Activated CD4-positive, alpha-beta memory T cell treated with anti-CD3 and anti-CD28 coated beads for 36 hours (primary cell): ENCODE measurements at regions of chr3 and their contacts with region 1.

Region 1: DNA sequence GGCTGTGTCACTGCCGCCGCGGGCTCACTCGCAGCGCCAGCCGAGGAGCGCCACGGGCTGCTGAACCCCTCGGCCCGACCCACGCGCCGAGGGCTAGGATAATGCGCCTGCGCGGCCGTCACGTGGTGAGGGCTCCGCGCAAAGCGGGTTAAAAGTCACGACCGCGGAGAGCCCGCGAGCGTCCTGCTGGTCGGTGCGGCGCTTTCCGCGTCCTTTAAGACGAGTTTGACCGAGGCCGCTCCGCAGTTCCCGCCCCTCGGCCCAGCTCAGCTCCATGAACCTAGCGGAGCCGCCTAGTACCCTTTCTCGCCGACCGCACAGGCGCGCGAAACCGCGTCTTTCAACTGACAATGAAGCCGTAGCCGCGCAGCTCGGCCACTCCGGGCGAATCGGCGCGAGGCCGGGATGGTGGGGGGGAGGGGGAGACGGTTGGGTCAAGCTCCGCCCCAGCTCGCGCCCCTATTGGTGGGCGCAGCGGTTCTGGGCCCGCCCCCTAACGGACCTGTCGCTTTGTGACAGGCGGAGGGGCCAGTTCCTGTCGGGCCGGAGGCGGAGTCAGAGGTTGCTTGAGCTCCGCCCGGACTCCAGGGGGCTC is 636 bp upstream of the STT3B start:
- DNase-seq: peak; percentile 99
- H3K4me3 Mint-ChIP-seq: peak overlapping the region; percentile 97
- H3K27ac Mint-ChIP-seq: peak overlapping the region; percentile 99
- H3K4me1 Mint-ChIP-seq: peaks cover 11% of the 10 kb centered on the region
- H3K27me3 Mint-ChIP-seq: no peaks in the 10 kb centered on the region

Region 2: GRCh38 chr3:30628901-30629590 is 903.0 kb before region 1 on chr3:
- CTCF ChIA-PET with region 1: no interaction called
- POLR2A ChIA-PET with region 1: no interaction called
- intact Hi-C with region 1: loop called (anchors 5 kb)
- DNase-seq: no peak
- H3K4me3 Mint-ChIP-seq: peak overlapping the region; percentile 45
- H3K27ac Mint-ChIP-seq: peak overlapping the region; percentile 91
- H3K4me1 Mint-ChIP-seq: peaks cover 90% of the 10 kb centered on the region
- H3K27me3 Mint-ChIP-seq: no peaks in the 10 kb centered on the region

Region 3: DNA sequence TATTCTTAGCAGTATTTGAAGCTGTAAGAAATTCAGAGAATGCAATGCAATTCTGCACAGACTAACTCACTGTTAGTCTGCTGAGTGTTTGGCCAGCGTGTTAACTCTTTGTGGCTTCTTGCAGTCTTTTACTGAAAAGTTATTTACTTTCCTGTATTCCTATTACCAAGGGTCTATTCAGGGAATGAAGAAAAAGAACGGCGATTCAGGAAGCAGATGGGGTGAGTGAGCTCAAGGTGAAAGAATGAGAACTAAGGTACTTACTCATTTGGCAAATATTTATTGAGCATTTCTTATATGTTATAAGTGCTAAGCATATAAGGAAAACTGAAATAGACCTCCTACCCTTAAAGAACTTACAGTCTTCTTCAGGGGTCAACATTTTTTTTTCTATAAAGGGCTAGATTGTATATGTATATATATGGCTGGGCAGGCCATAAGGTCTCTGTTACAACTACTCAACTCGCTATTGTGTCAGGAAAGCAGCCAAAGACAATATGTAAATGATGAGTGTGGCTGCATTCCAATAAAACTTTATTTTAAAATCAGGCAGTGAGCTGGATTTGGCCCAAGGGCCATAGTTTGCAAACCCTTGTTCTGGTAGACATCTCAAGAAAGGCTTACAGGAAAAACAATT is 365.7 kb before region 1 on chr3:
- CTCF ChIA-PET with region 1: no interaction called
- POLR2A ChIA-PET with region 1: no interaction called
- intact Hi-C with region 1: no loop called
- DNase-seq: no peak
- H3K4me3 Mint-ChIP-seq: no peak overlapping the region
- H3K27ac Mint-ChIP-seq: no peak overlapping the region
- H3K4me1 Mint-ChIP-seq: no peaks in the 10 kb centered on the region
- H3K27me3 Mint-ChIP-seq: no peaks in the 10 kb centered on the region

Region 4: GRCh38 chr3:31227131-31227562 is 304.9 kb before region 1 on chr3:
- CTCF ChIA-PET with region 1: no interaction called
- POLR2A ChIA-PET with region 1: interaction called, 4 read pairs
- intact Hi-C with region 1: loop called (anchors 2 kb)
- DNase-seq: no peak
- H3K4me3 Mint-ChIP-seq: peak overlapping the region; percentile 2
- H3K27ac Mint-ChIP-seq: peak overlapping the region; percentile 84
- H3K4me1 Mint-ChIP-seq: peaks cover 87% of the 10 kb centered on the region
- H3K27me3 Mint-ChIP-seq: no peaks in the 10 kb centered on the region

Region 5: GRCh38 chr3:31377045-31377642 is 154.9 kb before region 1 on chr3:
- CTCF ChIA-PET with region 1: no interaction called
- POLR2A ChIA-PET with region 1: interaction called, 3 read pairs
- intact Hi-C with region 1: loop called (anchors 5 kb)
- DNase-seq: peak; percentile 50
- H3K4me3 Mint-ChIP-seq: no peak overlapping the region
- H3K27ac Mint-ChIP-seq: no peak overlapping the region
- H3K4me1 Mint-ChIP-seq: peaks cover 13% of the 10 kb centered on the region
- H3K27me3 Mint-ChIP-seq: no peaks in the 10 kb centered on the region

Region 6: GRCh38 chr3:31544634-31545033 is 12.5 kb after region 1 on chr3:
- CTCF ChIA-PET with region 1: interaction called, 10 read pairs
- POLR2A ChIA-PET with region 1: interaction called, 11 read pairs
- intact Hi-C with region 1: no loop called
- DNase-seq: no peak
- H3K4me3 Mint-ChIP-seq: no peak overlapping the region
- H3K27ac Mint-ChIP-seq: no peak overlapping the region
- H3K4me1 Mint-ChIP-seq: peaks cover 81% of the 10 kb centered on the region
- H3K27me3 Mint-ChIP-seq: no peaks in the 10 kb centered on the region

Region 7: GRCh38 chr3:31754575-31755278 is 222.6 kb after region 1 on chr3:
- CTCF ChIA-PET with region 1: interaction called, 4 read pairs
- POLR2A ChIA-PET with region 1: interaction called, 6 read pairs
- intact Hi-C with region 1: loop called (anchors 10 kb)
- DNase-seq: peak; percentile 25
- H3K4me3 Mint-ChIP-seq: no peak overlapping the region
- H3K27ac Mint-ChIP-seq: peak overlapping the region; percentile 94
- H3K4me1 Mint-ChIP-seq: peaks cover 46% of the 10 kb centered on the region
- H3K27me3 Mint-ChIP-seq: no peaks in the 10 kb centered on the region

Region 8: DNA sequence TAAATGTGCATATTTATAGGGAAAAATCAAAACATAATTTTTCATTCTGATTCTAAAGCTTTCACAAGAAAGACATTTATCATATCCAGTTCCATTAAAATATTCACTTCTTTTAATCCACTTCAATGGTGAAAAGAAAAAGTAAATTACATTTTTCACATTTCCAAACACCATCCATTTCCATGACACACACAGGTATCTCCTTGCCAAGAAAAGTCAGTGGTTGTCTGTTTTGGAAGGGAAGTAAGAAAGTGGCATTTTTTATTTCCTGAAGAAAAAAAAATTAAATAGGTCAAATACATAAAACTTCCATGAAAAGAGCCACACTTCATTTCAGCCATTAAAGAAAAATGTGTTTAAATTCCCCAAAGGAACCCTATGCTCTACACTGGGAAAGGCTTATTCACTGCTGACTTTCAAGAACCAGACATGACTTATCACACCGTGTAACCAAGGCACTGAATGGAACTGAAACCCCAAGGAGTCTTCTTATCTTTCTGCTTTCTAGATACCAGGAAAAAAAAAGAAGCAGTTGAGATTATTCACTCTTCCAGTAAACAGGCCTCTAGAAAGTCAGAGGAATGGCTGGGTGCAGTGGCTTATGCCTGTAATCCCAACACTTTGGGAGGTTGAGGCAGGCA is 404.5 kb after region 1 on chr3:
- CTCF ChIA-PET with region 1: no interaction called
- POLR2A ChIA-PET with region 1: no interaction called
- intact Hi-C with region 1: no loop called
- DNase-seq: no peak
- H3K4me3 Mint-ChIP-seq: no peak overlapping the region
- H3K27ac Mint-ChIP-seq: no peak overlapping the region
- H3K4me1 Mint-ChIP-seq: peaks cover 3% of the 10 kb centered on the region
- H3K27me3 Mint-ChIP-seq: peaks cover 3% of the 10 kb centered on the region